Caco-2 (cell line): ENCODE measurements at regions of chr5 and their contacts with region 1.

Region 1: GRCh38 chr5:141811287-141812155 is 66.7 kb downstream of the PCDH1 start:
- DNase-seq: peak in 1 of 2 experiments; percentile 22
- H3K4me3 ChIP-seq: no peak overlapping the region
- H3K4me3 Mint-ChIP-seq: no peak overlapping the region
- H3K27ac Mint-ChIP-seq: no peak overlapping the region
- H3K4me1 ChIP-seq: no peaks in the 10 kb centered on the region
- H3K4me1 Mint-ChIP-seq: no peaks in the 10 kb centered on the region
- H3K27me3 ChIP-seq: peaks cover 1% of the 10 kb centered on the region; the same call in 1 of the 2 replicates
- H3K27me3 Mint-ChIP-seq: peaks cover 15% of the 10 kb centered on the region
- CTCF ChIP-seq: peak; percentile 78 to 83

Region 2: DNA sequence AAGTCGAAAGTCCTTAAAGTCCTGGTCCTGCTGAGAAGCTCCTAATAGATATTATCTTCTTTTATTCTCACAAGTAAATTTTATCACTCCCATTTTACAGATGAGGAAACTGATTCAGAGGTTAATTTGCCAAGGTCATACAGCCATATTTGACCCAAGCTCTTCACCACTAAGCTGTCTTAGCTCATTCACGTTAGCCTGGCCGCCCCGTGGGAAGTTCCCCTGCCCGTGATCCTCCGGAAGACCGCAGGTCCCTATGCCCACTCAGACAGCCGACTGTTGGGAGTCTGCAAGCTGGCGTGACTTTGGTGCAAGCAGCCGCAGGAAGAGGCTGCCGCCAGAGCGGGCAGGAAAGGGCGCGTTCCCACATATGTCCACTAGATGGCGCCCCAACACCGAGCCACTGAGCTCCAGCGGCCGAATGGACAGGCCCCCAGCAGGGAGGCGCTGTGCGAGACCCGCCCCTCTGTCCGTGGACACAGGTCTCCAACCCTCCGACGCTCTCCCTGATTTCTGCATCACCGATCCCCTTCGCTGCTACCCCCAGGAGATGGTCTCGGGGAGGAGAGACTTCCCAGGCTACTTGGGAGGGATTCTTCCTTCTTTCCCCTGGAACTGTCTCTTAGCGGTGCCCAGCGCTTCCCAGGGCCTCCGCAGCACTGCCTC is 119.5 kb before region 1 on chr5:
- CTCF ChIA-PET with region 1: interaction called, 12 read pairs
- POLR2A ChIA-PET with region 1: no interaction called
- intact Hi-C with region 1: loop called (anchors 1 kb)
- DNase-seq: peak; percentile 81 to 92
- H3K4me3 ChIP-seq: peak overlapping the region; percentile 39
- H3K4me3 Mint-ChIP-seq: peak overlapping the region; percentile 71
- H3K27ac Mint-ChIP-seq: no peak overlapping the region
- H3K4me1 ChIP-seq: no peaks in the 10 kb centered on the region
- H3K4me1 Mint-ChIP-seq: no peaks in the 10 kb centered on the region
- H3K27me3 ChIP-seq: no peaks in the 10 kb centered on the region; the same call in 1 of the 2 replicates
- H3K27me3 Mint-ChIP-seq: peaks cover 7% of the 10 kb centered on the region
- CTCF ChIP-seq: peak; percentile 88 to 97

Region 3: GRCh38 chr5:141701360-141702119 is 110.0 kb before region 1 on chr5:
- CTCF ChIA-PET with region 1: interaction called, 5 read pairs
- POLR2A ChIA-PET with region 1: no interaction called
- intact Hi-C with region 1: loop called (anchors 1 kb)
- DNase-seq: no peak
- H3K4me3 ChIP-seq: no peak overlapping the region
- H3K4me3 Mint-ChIP-seq: no peak overlapping the region
- H3K27ac Mint-ChIP-seq: no peak overlapping the region
- H3K4me1 ChIP-seq: peaks cover 15% of the 10 kb centered on the region
- H3K4me1 Mint-ChIP-seq: no peaks in the 10 kb centered on the region
- H3K27me3 ChIP-seq: peaks cover 1% of the 10 kb centered on the region; the same call in 1 of the 2 replicates
- H3K27me3 Mint-ChIP-seq: peaks cover 25% of the 10 kb centered on the region
- CTCF ChIP-seq: no peak

Region 4: DNA sequence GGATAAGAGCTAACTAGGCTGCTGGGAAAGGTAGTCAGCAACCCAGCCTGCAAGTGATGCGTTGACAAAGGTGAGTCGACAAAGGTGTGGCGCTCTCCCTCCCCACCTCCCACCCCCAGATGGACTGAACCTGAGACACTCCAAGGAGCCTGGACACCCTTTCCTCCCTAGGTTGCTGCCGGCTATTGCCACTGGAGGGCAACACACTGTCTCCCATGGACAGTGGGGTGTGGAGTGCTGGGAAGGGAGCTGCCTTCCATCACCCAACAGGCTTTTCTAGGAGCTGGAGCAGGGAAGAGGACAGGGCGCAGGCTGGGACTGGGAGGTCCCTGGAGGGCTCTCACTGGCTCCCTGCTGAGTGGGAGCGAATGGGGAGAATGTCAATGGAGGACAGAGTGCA is 54.1 kb before region 1 on chr5:
- CTCF ChIA-PET with region 1: interaction called, 6 read pairs
- POLR2A ChIA-PET with region 1: no interaction called
- intact Hi-C with region 1: loop called (anchors 5 kb)
- DNase-seq: peak; percentile 58 to 63
- H3K4me3 ChIP-seq: no peak overlapping the region
- H3K4me3 Mint-ChIP-seq: no peak overlapping the region
- H3K27ac Mint-ChIP-seq: peak overlapping the region; percentile 2
- H3K4me1 ChIP-seq: peaks cover 7% of the 10 kb centered on the region
- H3K4me1 Mint-ChIP-seq: peaks cover 20% of the 10 kb centered on the region
- H3K27me3 ChIP-seq: no peaks in the 10 kb centered on the region
- H3K27me3 Mint-ChIP-seq: peaks cover 9% of the 10 kb centered on the region
- CTCF ChIP-seq: peak; percentile 20 to 50